ENCODE measurements at regions of chr18 and their contacts with region 1.

Region 1: DNA sequence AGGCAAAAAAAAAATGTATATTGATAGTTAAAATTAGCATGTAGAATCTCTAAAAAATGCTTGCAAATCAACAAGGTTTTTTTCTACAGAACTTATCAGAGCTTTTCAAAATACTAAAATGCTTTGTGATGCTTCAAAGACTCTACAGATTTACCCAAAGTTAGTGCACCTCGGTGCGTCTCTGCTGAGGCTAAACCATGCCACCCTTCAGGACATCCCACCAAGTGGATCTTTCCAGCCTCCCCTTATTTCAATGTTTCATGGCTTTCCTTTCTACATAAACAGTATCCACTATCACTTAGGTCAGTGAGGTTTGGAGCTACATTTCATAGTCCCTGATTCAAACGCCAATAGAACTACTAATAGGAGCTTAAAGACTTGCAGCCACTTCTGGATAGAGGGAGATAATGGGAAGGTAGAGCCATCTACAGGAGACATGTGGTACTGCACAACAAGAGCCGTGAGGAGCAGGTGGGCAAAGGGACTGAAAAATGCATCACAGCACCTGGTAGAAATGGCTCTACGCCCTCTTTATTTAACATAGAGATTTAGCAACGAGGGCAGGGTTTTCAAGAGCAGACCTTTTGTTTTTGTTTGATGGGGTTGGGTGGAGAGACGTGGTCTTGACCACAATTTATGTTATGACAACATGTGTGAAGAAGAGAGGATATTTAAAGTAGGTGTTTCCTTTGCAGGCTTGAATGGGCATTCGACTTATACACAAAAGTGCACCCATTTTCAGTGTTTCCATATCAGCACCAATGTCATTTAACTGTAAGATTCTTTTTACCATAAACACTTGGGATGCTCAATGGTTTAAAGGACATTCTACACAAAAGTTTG is 56.1 kb upstream of the SLC35G4 start:
- DNase-seq: peak; percentile 58
- H3K4me3 ChIP-seq: peak overlapping the region in 1 of 2 experiments; percentile 35; a peak in 1 of 4 replicates
- H3K27ac ChIP-seq: no peak overlapping the region
- H3K4me1 ChIP-seq: no peaks in the 10 kb centered on the region
- H3K27me3 ChIP-seq: peaks cover 23% of the 10 kb centered on the region; the same call in 1 of the 2 replicates
- CTCF ChIP-seq: peak; percentile 94
- EP300 ChIP-seq: no peak
- RAD21 ChIP-seq: peak; percentile 78

Region 2: DNA sequence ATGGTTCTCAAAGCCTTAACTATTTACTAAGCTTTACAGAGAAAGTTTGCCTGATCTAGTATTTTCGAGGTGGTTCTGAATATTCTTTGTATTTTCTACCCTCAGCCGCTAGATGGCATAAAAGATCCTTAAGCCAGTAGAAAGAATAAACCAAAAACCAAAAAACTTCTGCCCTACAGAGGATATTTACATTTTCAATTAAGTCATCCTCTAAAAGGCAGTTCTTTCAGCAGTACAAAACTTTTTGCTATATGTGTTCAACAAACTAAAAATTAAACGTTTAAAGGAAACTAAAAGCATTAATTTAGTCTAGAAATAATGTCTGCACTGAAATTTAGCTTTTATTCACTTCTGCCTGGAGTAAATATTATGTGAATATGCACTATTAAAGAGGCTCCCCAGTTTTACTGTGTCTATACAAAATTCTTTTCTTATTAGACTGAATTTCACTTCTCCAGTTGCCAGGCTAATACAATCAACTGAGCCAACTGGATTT is 701.4 kb before region 1 on chr18:
- CTCF ChIA-PET with region 1: interaction called, 19 read pairs
- POLR2A ChIA-PET with region 1: no interaction called
- DNase-seq: peak; percentile 29
- H3K4me3 ChIP-seq: peak overlapping the region in 1 of 2 experiments; percentile 10; a peak in 1 of 4 replicates
- H3K27ac ChIP-seq: no peak overlapping the region
- H3K4me1 ChIP-seq: no peaks in the 10 kb centered on the region
- H3K27me3 ChIP-seq: peaks cover 24% of the 10 kb centered on the region
- CTCF ChIP-seq: peak; percentile 87
- EP300 ChIP-seq: no peak
- RAD21 ChIP-seq: peak; percentile 81

Region 3: DNA sequence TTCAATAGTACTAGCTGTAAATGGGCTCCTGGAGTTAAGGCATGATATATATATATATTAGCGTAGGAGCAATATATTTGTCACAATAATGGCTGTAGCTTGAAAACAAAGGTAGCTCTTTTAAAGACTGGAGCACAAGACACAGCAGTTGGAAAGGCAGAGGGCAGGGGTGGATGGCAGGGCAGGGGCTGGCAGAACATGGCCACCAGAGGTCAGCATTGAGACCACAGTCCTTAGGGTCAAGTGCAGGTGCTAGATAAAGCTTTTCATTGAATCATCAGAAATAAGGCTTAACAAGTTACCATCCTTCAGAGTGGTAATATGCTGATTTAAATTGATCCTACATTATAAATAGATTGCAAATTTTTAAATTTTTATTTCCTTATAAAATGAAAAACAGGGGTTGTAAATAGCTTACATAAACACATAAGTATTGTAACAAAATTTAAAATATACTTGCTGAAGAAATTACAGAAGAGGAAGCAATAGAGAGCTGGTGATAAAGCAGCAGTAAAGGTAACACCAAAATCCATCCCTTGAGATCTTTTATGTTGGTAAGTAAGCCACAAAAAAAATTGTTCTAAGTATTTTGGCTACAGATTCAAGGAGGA is 242.7 kb before region 1 on chr18:
- CTCF ChIA-PET with region 1: interaction called, 21 read pairs
- POLR2A ChIA-PET with region 1: no interaction called
- DNase-seq: peak; percentile 44
- H3K4me3 ChIP-seq: no peak overlapping the region; a peak in 1 of 4 replicates
- H3K27ac ChIP-seq: no peak overlapping the region
- H3K4me1 ChIP-seq: 0 out of 4 replicates have a peak, but pooled peaks cover 0 to 6% of the 10 kb centered on the region in 2 experiments
- H3K27me3 ChIP-seq: no peaks in the 10 kb centered on the region
- CTCF ChIP-seq: peak; percentile 84
- EP300 ChIP-seq: no peak
- RAD21 ChIP-seq: peak; percentile 52

Region 4: GRCh38 chr18:11518788-11519685 is 34.3 kb before region 1 on chr18:
- CTCF ChIA-PET with region 1: interaction called, 21 read pairs
- POLR2A ChIA-PET with region 1: no interaction called
- DNase-seq: peak; percentile 54
- H3K4me3 ChIP-seq: peak overlapping the region in 1 of 2 experiments; percentile 30; a peak in 2 of 4 replicates
- H3K27ac ChIP-seq: no peak overlapping the region
- H3K4me1 ChIP-seq: no peaks in the 10 kb centered on the region
- H3K27me3 ChIP-seq: peaks cover 7% of the 10 kb centered on the region; the same call in 1 of the 2 replicates
- CTCF ChIP-seq: peak; percentile 82
- EP300 ChIP-seq: no peak
- RAD21 ChIP-seq: peak; percentile 54

Region 5: DNA sequence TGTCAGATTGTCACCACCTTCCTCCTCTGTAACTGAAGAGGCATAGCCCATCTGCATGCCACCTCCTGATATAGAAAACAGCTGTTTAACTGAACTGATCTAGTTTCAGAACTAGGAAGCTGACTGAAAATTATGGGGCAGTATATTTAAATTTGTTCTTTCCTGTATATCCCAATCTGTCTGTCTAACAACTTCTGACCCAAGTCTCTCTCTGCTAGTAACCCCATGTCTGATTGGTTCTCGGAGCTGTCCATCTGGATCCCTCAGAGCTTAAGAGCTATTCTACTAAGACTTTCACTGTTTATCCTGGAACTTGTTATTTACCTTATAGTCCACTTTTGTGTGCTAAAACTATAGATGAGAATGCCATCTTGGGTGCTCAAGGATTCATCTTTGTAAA is 12.1 kb before region 1 on chr18:
- CTCF ChIA-PET with region 1: interaction called, 29 read pairs
- POLR2A ChIA-PET with region 1: no interaction called
- DNase-seq: no peak
- H3K4me3 ChIP-seq: no peak overlapping the region
- H3K27ac ChIP-seq: no peak overlapping the region
- H3K4me1 ChIP-seq: no peaks in the 10 kb centered on the region
- H3K27me3 ChIP-seq: peaks cover 7% of the 10 kb centered on the region
- CTCF ChIP-seq: no peak
- EP300 ChIP-seq: no peak
- RAD21 ChIP-seq: no peak

Region 6: GRCh38 chr18:11567396-11567795 is 14.1 kb after region 1 on chr18:
- CTCF ChIA-PET with region 1: interaction called, 10 read pairs
- POLR2A ChIA-PET with region 1: no interaction called
- DNase-seq: no peak
- H3K4me3 ChIP-seq: no peak overlapping the region
- H3K27ac ChIP-seq: no peak overlapping the region
- H3K4me1 ChIP-seq: no peaks in the 10 kb centered on the region
- H3K27me3 ChIP-seq: peaks cover 48% of the 10 kb centered on the region; the same call in 1 of the 2 replicates
- CTCF ChIP-seq: no peak
- EP300 ChIP-seq: no peak
- RAD21 ChIP-seq: no peak

Measured in SK-N-SH (cell line).